A549 (cell line): ENCODE measurements at regions of chr10 and their contacts with region 1.

Region 1: GRCh38 chr10:93376372-93377293 is 105.5 kb downstream of the MYOF start:
- DNase-seq: peak; percentile 76 to 90
- ATAC-seq: peak; percentile 80 to 90
- H3K4me3 ChIP-seq: peak overlapping the region; percentile 19; the same call in 2 of the 3 replicates
- H3K27ac ChIP-seq: peak overlapping the region; percentile 87
- H3K4me1 ChIP-seq: peaks cover 42% of the 10 kb centered on the region
- CTCF ChIP-seq: peak; percentile 98
- EP300 ChIP-seq: no peak
- POLR2A ChIP-seq: no peak
- RAD21 ChIP-seq: peak; percentile 98

Region 2: GRCh38 chr10:93352638-93353383 is 23.8 kb before region 1 on chr10:
- CTCF ChIA-PET with region 1: interaction called, 150 read pairs
- POLR2A ChIA-PET with region 1: no interaction called
- DNase-seq: peak; percentile 38 to 44
- ATAC-seq: peak in 1 of 2 experiments; percentile 58; a peak in 3 of 6 replicates
- H3K4me3 ChIP-seq: no peak overlapping the region
- H3K27ac ChIP-seq: no peak overlapping the region
- H3K4me1 ChIP-seq: no peaks in the 10 kb centered on the region
- CTCF ChIP-seq: peak; percentile 86
- EP300 ChIP-seq: no peak
- POLR2A ChIP-seq: no peak
- RAD21 ChIP-seq: peak; percentile 49 to 58

Region 3: GRCh38 chr10:93403152-93404041 is 26.8 kb after region 1 on chr10:
- CTCF ChIA-PET with region 1: interaction called, 34 read pairs
- POLR2A ChIA-PET with region 1: no interaction called
- DNase-seq: no peak
- ATAC-seq: no peak; a peak in 1 of 6 replicates
- H3K4me3 ChIP-seq: no peak overlapping the region
- H3K27ac ChIP-seq: no peak overlapping the region; a peak in 1 of 6 replicates
- H3K4me1 ChIP-seq: peaks cover 14% of the 10 kb centered on the region
- CTCF ChIP-seq: no peak
- EP300 ChIP-seq: no peak
- POLR2A ChIP-seq: no peak
- RAD21 ChIP-seq: no peak

Region 4: GRCh38 chr10:93425861-93426260 is 49.2 kb after region 1 on chr10:
- CTCF ChIA-PET with region 1: interaction called, 14 read pairs
- POLR2A ChIA-PET with region 1: no interaction called
- DNase-seq: no peak
- ATAC-seq: peak; percentile 10 to 19; a peak in 1 of 6 replicates
- H3K4me3 ChIP-seq: no peak overlapping the region
- H3K27ac ChIP-seq: peak overlapping the region in 1 of 2 experiments; percentile 66; a peak in 3 of 6 replicates
- H3K4me1 ChIP-seq: peaks cover 30% of the 10 kb centered on the region
- CTCF ChIP-seq: no peak
- EP300 ChIP-seq: no peak
- POLR2A ChIP-seq: no peak
- RAD21 ChIP-seq: no peak

Region 5: DNA sequence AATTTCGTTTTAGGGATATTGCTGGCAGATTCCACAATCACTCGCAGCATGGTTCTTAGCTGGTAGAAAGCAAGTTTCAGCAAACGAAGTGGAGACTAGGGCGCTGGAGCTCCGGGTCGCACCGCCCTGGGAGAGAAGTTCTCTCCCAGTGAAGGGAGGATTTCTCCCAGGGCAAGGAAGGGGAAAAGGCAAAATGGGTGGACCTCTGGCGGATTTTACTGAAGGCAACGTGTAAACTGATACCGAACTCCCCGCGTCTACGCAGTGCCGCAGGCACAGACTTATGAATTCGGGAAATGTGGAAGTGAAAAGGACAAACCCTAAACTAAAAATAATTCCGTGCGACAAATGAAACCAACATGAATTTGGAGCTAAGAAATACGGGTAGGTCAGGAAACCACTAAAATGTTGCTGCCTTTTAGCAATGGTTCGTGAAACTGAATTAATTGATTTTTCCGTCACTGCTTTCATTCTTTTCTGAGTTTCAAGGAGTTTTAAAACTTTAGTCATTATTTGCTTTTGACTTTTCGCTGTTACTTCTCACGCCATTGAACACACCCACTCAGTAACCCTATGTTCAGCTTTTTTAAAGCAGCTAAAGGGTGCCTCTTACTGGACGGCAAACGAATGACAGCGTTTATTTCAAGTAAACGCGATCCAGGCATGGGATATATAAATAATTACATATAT is 105.7 kb after region 1 on chr10 and contains the start of gene MYOF:
- CTCF ChIA-PET with region 1: interaction called, 924 read pairs
- POLR2A ChIA-PET with region 1: interaction called, 70 read pairs
- DNase-seq: peak; percentile 87 to 91
- ATAC-seq: peak; percentile 84 to 93
- H3K4me3 ChIP-seq: peak within 1 kb of the TSS; percentile 61
- H3K27ac ChIP-seq: peak within 1 kb of the TSS; percentile 93
- H3K4me1 ChIP-seq: peaks cover 30% of the 10 kb centered on the region
- CTCF ChIP-seq: peak; percentile 63
- EP300 ChIP-seq: no peak
- POLR2A ChIP-seq: peak; percentile 68
- RAD21 ChIP-seq: peak; percentile 85 to 90
- polyA plus RNA-seq, gene MYOF: 229 and 265 TPM in 2 replicates

Region 6: DNA sequence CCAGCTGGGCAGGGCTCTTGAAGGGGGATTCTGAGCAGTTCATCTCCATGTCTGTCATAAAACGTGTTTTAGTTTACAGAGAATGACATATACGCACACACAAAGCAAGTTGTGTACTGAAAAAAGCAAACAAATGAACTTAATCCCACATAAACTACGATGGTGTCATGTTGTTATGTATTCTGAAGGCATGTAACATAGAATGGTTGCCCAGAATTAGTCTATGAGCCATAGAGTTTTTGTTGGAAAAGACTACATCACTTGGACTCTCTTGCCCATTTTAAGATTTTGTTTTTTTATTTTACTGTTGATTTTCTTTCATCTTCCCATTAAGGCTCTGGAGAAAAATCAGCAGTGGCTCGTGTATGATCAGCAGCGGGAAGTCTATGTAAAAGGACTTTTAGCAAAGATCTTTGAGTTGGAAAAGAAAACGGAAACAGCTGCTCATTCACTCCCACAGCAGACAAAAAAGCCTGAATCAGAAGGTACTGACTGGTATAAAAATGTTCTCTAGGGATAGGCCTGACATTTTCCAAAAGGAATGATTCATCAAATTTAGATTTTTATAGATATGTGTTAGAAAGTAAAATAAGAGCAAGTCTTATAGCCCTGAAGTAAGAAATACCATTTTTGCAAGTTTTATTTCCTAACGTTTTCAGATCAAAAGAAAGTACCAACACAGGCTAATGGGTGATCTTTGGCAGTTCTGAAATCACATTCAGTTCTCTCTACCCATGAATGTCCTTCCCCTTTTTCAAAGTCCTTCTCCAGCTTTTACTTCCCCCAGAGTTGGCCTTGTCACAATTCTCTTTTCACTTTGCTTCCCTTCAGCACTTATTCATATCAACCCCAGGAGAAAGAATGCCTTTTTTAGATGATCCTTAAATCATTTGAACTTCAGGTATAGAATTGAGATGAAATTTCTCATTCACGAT is 138.7 kb after region 1 on chr10:
- CTCF ChIA-PET with region 1: interaction called, 92 read pairs
- POLR2A ChIA-PET with region 1: no interaction called
- DNase-seq: no peak
- ATAC-seq: no peak
- H3K4me3 ChIP-seq: no peak overlapping the region
- H3K27ac ChIP-seq: no peak overlapping the region
- H3K4me1 ChIP-seq: no peaks in the 10 kb centered on the region
- CTCF ChIP-seq: no peak
- EP300 ChIP-seq: no peak
- POLR2A ChIP-seq: no peak
- RAD21 ChIP-seq: no peak